ENCODE measurements at regions of chr1 and their contacts with region 1.

Region 1: DNA sequence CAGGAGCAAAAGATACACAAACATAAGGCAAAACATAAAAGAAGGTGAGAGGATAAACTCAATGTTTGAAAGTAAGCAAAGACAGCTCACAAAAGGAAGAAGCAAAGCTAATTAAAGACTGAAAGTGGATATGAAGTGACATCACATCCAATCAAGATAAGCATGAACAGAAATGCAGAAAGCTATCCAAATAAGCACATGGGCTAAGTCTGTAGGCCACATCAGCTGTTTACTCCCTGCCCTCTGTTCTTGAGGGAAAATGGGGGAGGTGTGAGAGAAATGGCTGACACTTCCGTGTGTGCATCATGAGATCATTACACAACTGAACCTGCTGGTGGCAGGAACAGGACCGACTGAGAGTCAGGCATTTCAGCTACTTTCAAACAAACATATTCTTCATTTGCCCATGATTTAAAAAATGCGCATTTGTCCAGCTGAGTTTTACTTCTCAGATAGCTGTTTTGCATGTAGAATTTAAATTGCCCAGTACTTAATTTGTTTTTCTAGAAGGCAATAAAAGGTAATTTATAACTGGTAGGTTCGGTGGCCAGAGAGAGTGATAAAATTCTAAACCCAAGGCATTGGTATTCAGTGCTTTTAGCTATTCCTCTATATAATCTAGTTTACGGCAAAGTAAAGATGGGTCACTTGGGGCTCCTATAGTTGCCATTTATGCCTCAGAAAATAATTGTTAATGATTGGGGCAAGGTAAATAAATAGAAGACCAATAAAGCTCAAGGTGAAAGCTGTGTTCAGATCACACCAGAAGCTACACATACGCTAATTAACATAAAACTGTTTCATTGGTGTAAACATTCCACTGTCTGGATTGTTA is 27.2 kb upstream of the MAN1A2 start:
- DNase-seq: no peak
- ATAC-seq: peak; percentile 68; the same call in 2 of the 3 replicates
- H3K4me3 ChIP-seq: no peak overlapping the region
- H3K27ac ChIP-seq: no peak overlapping the region
- H3K4me1 ChIP-seq: no peaks in the 10 kb centered on the region
- H3K27me3 ChIP-seq: no peaks in the 10 kb centered on the region; a peak in 1 of 4 replicates
- CTCF ChIP-seq: no peak
- EP300 ChIP-seq: no peak
- POLR2A ChIP-seq: no peak
- RAD21 ChIP-seq: no peak

Region 2: DNA sequence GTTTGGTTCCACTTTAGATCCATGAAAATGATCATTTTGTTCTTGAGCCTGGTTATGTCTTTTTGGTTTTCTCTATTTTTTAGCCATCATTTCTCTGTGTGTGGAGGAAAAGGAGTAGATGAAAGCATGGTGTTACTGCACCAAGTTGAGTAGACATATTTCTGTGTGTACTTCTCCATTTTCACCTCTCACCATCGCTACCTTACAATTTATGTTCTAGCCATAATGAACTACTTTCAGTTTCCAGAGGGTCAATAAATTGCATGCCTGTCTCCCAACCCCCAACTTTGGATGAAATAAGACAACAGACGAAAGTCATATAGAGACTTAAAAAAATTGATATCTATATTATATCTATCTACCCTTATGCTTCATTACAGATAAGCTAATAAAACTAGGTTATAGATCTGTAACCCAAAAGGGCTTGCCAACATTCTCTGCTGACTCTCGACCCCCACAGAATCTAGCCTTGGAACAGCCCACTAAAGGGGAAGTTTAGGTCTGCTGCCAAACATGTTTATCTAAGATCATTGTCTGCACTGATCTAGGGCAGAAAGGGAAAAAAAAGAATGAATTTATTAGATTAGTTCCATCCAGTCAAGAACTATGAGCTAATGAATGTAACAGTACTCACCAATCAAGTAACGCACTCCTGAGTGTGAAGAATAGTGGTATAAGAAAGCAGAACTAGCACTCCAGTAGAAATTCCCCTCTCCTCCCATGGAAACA is 19.6 kb after region 1 on chr1:
- CTCF ChIA-PET with region 1: interaction called, 15 read pairs
- POLR2A ChIA-PET with region 1: no interaction called
- RAD21 ChIA-PET with region 1: interaction called, 5 read pairs
- SMC1A ChIA-PET with region 1: interaction called, 5 read pairs
- in situ Hi-C with region 1: no loop called
- intact Hi-C with region 1: no loop called
- DNase-seq: no peak
- ATAC-seq: peak; percentile 19; the same call in 2 of the 3 replicates
- H3K4me3 ChIP-seq: no peak overlapping the region
- H3K27ac ChIP-seq: no peak overlapping the region
- H3K4me1 ChIP-seq: peaks cover 15% of the 10 kb centered on the region
- H3K27me3 ChIP-seq: no peaks in the 10 kb centered on the region
- CTCF ChIP-seq: no peak
- EP300 ChIP-seq: no peak
- POLR2A ChIP-seq: no peak
- RAD21 ChIP-seq: no peak